ENCODE measurements at regions of chr5 and their contacts with region 1.

Region 1: GRCh38 chr5:141094481-141095262 is at the start of gene PCDHB2:
- H3K4me3 ChIP-seq: peak within 1 kb of the TSS; percentile 55
- H3K27ac ChIP-seq: no peak within 1 kb of the TSS
- H3K4me1 ChIP-seq: no peaks in the 10 kb centered on the region
- CTCF ChIP-seq: no peak

Region 2: GRCh38 chr5:141084487-141084990 is 10.1 kb before region 1 on chr5:
- CTCF ChIA-PET with region 1: interaction called, 13 read pairs
- POLR2A ChIA-PET with region 1: interaction called, 6 read pairs
- H3K4me3 ChIP-seq: peak overlapping the region; percentile 40
- H3K27ac ChIP-seq: no peak overlapping the region
- H3K4me1 ChIP-seq: no peaks in the 10 kb centered on the region
- CTCF ChIP-seq: no peak

Region 3: GRCh38 chr5:141208478-141208877 is 113.8 kb after region 1 on chr5 and contains the start of gene PCDHB12:
- CTCF ChIA-PET with region 1: no interaction called
- POLR2A ChIA-PET with region 1: no interaction called
- H3K4me3 ChIP-seq: no peak within 1 kb of the TSS
- H3K27ac ChIP-seq: no peak within 1 kb of the TSS
- H3K4me1 ChIP-seq: no peaks in the 10 kb centered on the region
- CTCF ChIP-seq: no peak

Region 4: GRCh38 chr5:141272906-141273305 is 178.2 kb after region 1 on chr5:
- CTCF ChIA-PET with region 1: no interaction called
- POLR2A ChIA-PET with region 1: no interaction called
- H3K4me3 ChIP-seq: no peak overlapping the region
- H3K27ac ChIP-seq: no peak overlapping the region
- H3K4me1 ChIP-seq: no peaks in the 10 kb centered on the region
- CTCF ChIP-seq: no peak

Region 5: GRCh38 chr5:141387233-141387949 is 292.7 kb after region 1 on chr5 and contains the start of gene PCDHGB4:
- CTCF ChIA-PET with region 1: no interaction called
- POLR2A ChIA-PET with region 1: no interaction called
- H3K4me3 ChIP-seq: no peak within 1 kb of the TSS
- H3K27ac ChIP-seq: no peak within 1 kb of the TSS
- H3K4me1 ChIP-seq: no peaks in the 10 kb centered on the region
- CTCF ChIP-seq: no peak

Region 6: GRCh38 chr5:142403571-142403971 is 1308.9 kb after region 1 on chr5:
- CTCF ChIA-PET with region 1: no interaction called
- POLR2A ChIA-PET with region 1: no interaction called
- H3K4me3 ChIP-seq: no peak overlapping the region
- H3K27ac ChIP-seq: no peak overlapping the region
- H3K4me1 ChIP-seq: no peaks in the 10 kb centered on the region
- CTCF ChIP-seq: no peak

Measured in HEK293 (cell line).